ENCODE measurements at regions of chr9 and their contacts with region 1.

Region 1: GRCh38 chr9:136339173-136339957 is 12.0 kb downstream of the GPSM1 start:
- DNase-seq: peak; percentile 88

Region 2: GRCh38 chr9:136354592-136355085 is 15.3 kb after region 1 on chr9:
- intact Hi-C with region 1: loop called (anchors 1 kb)
- DNase-seq: peak; percentile 91

Region 3: GRCh38 chr9:136363606-136364370 is 24.4 kb after region 1 on chr9 and contains the start of gene DNLZ:
- intact Hi-C with region 1: loop called (anchors 2 kb)
- DNase-seq: peak; percentile 93
- total RNA-seq, gene DNLZ: 34.1 TPM

Region 4: DNA sequence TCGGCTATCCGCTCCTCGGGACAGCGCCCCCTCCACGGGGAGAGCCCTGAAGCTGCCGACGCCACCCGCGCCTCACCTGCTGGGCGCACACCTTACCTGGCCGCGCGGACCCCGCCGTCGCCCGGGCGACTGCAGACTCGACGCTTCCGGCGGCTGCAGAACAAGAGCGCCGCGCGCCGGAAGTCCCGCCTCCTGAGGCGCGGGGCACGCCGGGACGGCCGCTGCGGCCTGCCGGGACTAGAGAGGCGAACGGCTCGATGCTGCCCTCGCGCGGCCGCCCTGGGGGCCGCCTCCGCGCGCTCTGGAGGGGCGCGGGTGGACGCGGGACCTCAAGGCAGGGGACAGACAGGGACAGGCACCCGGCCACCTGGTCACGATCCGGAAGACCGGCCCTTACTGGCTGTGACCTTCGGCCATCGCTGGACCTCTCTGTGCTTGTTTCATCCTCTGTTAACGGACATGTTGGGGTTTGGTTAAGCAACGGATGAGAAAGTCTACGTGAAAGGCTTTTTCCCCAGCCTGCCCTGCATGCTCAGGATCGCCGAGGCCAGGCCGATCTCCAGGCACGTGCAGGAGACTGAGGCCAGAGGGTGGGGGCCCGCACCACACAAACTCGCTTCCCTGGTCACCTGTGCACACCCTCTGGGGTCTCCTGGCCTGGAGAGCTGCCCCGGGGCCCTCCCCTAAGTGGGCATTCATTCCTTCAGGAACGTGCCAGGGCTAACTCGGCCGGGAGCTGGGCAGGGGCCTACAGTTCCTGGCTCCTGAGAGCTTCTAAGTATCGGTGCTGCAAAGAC is 60.9 kb after region 1 on chr9 and contains the start of gene SNAPC4:
- intact Hi-C with region 1: loop called (anchors 2 kb)
- DNase-seq: peak; percentile 94
- total RNA-seq, gene SNAPC4: 3.9 TPM

Measured in cardiac septum (tissue), 1 donor.